ENCODE measurements at regions of chr6 and their contacts with region 1.

Region 1: DNA sequence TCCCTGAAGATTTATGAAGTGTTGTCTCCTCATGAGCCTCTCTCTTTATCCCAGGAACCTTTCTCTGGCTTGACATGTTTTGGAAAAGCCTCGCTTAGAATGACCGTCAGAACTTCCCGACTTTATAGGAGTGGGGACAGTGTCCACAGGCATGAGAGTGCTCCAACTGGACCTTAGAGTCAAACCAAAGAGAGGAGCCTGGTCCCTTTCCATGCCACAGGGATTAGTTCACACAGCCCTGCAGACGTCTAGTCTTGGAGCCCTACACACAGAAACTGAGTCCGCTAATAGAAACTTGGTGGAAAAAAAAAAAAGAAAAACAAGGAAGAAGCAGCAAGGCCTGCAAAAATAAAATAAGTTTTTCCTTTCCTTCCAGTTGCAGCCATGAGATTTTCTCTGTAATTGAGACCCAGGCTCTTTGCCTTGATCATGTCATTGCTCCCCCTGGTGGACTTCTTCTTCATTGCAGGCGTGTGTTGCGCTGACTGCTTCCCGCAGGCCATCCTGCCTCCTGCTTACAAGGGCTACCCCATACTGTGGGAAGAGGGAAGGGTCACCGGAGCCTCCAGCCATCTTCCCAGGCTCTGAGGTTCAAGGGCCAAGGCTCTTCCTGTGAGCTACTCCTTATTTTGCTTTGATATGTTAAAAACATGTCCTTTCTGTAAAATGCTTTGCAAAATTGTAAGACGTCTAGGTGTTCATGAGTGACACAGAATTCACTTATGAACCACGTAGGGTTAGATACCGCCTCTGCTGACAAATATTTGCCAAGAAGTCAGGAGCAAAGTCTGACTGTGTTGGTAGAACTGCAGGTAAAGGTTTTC is 201.0 kb downstream of the UST start:
- DNase-seq: peak; percentile 74 to 90
- ATAC-seq: peak; percentile 86 to 99 (median 98)
- H3K4me3 ChIP-seq: no peak overlapping the region
- H3K4me3 Mint-ChIP-seq: no peak overlapping the region
- H3K27ac ChIP-seq: no peak overlapping the region
- H3K27ac Mint-ChIP-seq: no peak overlapping the region
- H3K4me1 ChIP-seq: no peaks in the 10 kb centered on the region
- H3K4me1 Mint-ChIP-seq: peaks cover 0 to 6% of the 10 kb centered on the region in 2 donors
- H3K27me3 ChIP-seq: no peaks in the 10 kb centered on the region
- H3K27me3 Mint-ChIP-seq: peaks cover 0 to 4% of the 10 kb centered on the region in 2 donors
- CTCF ChIP-seq: peak; percentile 88

Region 2: GRCh38 chr6:148559848-148560433 is 387.9 kb before region 1 on chr6:
- intact Hi-C with region 1: loop called (anchors 1 kb)
- DNase-seq: peak; percentile 71 to 83
- ATAC-seq: peak; percentile 87 to 93 (median 92)
- H3K4me3 ChIP-seq: no peak overlapping the region
- H3K4me3 Mint-ChIP-seq: no peak overlapping the region
- H3K27ac ChIP-seq: no peak overlapping the region
- H3K27ac Mint-ChIP-seq: no peak overlapping the region
- H3K4me1 ChIP-seq: peaks cover 25% of the 10 kb centered on the region
- H3K4me1 Mint-ChIP-seq: peaks cover 9 to 15% of the 10 kb centered on the region in 2 donors
- H3K27me3 ChIP-seq: peaks cover 30% of the 10 kb centered on the region
- H3K27me3 Mint-ChIP-seq: peaks cover 41 to 78% of the 10 kb centered on the region in 2 donors
- CTCF ChIP-seq: peak; percentile 98

Region 3: GRCh38 chr6:148578245-148578732 is 369.5 kb before region 1 on chr6:
- intact Hi-C with region 1: loop called (anchors 1 kb)
- DNase-seq: peak in 1 of 2 donors; percentile 68
- ATAC-seq: peak; percentile 80 to 97 (median 89)
- H3K4me3 ChIP-seq: no peak overlapping the region
- H3K4me3 Mint-ChIP-seq: no peak overlapping the region
- H3K27ac ChIP-seq: no peak overlapping the region
- H3K27ac Mint-ChIP-seq: no peak overlapping the region
- H3K4me1 ChIP-seq: no peaks in the 10 kb centered on the region
- H3K4me1 Mint-ChIP-seq: peaks cover 5 to 6% of the 10 kb centered on the region in 2 donors
- H3K27me3 ChIP-seq: peaks cover 4% of the 10 kb centered on the region
- H3K27me3 Mint-ChIP-seq: peaks cover 52 to 81% of the 10 kb centered on the region in 2 donors
- CTCF ChIP-seq: peak; percentile 43

Measured in natural killer cell (primary cell).